ENCODE measurements at regions of chr3 and their contacts with region 1.

Region 1: DNA sequence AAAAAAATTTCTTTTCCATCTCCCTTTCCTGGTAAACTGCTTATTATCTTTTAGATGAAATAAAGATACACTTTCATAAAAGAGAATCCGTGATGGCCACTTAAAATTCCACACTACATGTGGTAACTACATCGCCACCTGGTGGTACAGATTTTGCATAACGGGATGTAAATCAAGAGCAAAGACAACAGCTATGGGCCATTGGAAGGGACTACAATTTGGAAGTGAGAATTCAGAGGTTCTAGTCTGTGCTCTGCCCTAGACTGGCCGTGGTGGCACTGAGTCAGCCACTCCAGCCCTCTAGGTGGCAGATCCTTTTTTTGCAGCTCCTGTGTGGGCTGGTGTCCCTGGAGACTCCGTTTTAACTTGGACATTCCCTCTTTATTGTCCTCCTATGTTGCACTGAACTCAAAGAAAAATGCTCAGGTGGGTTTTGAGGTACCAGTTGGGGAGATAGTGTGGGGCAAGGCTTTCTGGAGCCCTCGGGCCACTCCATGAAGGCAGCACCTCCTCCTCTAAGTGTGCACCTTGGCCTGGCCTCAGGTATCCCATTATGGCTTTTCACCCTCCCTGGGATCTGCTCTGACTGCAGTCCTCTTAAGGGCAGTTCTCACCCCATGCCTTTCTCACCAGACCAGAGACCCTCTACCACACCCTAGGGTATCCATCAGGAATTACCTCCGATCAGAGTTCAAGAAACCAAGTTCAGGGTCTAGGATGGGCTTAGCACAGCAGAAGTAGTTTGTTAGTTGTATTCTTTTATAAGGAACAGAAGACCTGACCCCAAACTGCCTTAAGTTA is 54.9 kb downstream of the SPSB4 start:
- DNase-seq: peak in 1 of 2 donors; percentile 87
- H3K4me3 ChIP-seq: no peak overlapping the region
- H3K27ac ChIP-seq: no peak overlapping the region
- H3K4me1 ChIP-seq: peaks cover 4 to 6% of the 10 kb centered on the region in 2 donors
- H3K27me3 ChIP-seq: no peaks in the 10 kb centered on the region
- CTCF ChIP-seq: peak; percentile 55 to 80 (median 66)

Region 2: GRCh38 chr3:141011232-141011996 is 94.6 kb before region 1 on chr3:
- intact Hi-C with region 1: loop called (anchors 2 kb)
- DNase-seq: peak in 1 of 2 donors; percentile 77
- H3K4me3 ChIP-seq: no peak overlapping the region
- H3K27ac ChIP-seq: no peak overlapping the region
- H3K4me1 ChIP-seq: no peaks in the 10 kb centered on the region
- H3K27me3 ChIP-seq: no peaks in the 10 kb centered on the region
- CTCF ChIP-seq: peak; percentile 56 to 83 (median 72)

Region 3: GRCh38 chr3:141050576-141051442 is 55.2 kb before region 1 on chr3 and contains the start of gene SPSB4:
- intact Hi-C with region 1: loop called (anchors 2 kb)
- DNase-seq: peak in 1 of 2 donors; percentile 74
- H3K4me3 ChIP-seq: peak within 1 kb of the TSS; percentile 63 to 85
- H3K27ac ChIP-seq: peak within 1 kb of the TSS in 1 of 2 donors; percentile 61
- H3K4me1 ChIP-seq: peaks cover 0 to 4% of the 10 kb centered on the region in 2 donors
- H3K27me3 ChIP-seq: no peaks in the 10 kb centered on the region
- CTCF ChIP-seq: peak in 2 of 3 experiments; percentile 28 to 57
- total RNA-seq, gene SPSB4: not detected

Region 4: DNA sequence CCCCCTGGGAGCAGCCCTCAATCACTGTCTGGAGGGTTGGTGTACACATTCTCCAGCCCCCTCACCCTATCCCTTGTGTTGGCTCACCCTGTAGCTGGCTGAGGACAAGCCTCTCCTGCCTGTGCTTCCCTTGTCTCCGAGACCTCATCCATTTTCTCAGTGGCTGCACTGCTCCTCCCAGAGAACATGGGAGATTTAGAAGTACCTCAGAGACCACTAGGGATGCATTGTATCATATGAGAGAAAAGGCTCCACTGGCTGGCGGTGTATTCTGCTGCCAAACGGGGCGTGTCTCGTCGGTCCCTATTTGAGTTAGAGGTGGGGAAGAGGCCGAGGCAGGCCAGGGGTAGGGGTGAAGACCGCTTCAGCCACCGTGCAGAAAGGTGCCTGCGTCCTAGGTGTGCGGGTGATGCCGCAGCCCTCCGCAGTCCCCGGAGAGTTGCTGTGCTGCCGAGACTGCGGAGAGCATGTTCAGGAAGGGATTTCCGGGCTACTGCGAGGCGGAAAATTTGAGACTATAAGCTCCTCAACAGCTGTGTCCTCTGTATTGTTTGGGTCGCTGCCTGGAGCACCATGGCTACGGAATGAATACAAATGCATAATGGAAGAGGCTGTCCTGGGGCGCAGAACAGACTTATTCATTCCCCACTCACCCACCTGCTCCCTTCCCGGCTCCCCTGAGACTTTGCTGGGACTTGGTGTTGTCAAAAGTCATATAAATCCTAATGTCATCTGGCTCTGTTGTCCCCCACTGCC is 11.1 kb before region 1 on chr3:
- intact Hi-C with region 1: loop called (anchors 2 kb)
- DNase-seq: peak; percentile 52 to 93
- H3K4me3 ChIP-seq: peak overlapping the region; percentile 15 to 46
- H3K27ac ChIP-seq: peak overlapping the region; percentile 63 to 73
- H3K4me1 ChIP-seq: peaks cover 3 to 27% of the 10 kb centered on the region in 2 donors
- H3K27me3 ChIP-seq: no peaks in the 10 kb centered on the region
- CTCF ChIP-seq: no peak

Region 5: GRCh38 chr3:141127344-141128125 is 21.5 kb after region 1 on chr3:
- intact Hi-C with region 1: no loop called
- DNase-seq: no peak
- H3K4me3 ChIP-seq: no peak overlapping the region
- H3K27ac ChIP-seq: no peak overlapping the region
- H3K4me1 ChIP-seq: peaks cover 0 to 6% of the 10 kb centered on the region in 2 donors
- H3K27me3 ChIP-seq: no peaks in the 10 kb centered on the region
- CTCF ChIP-seq: peak in 1 of 3 experiments; percentile 12